CD8-positive, alpha-beta memory T cell (primary cell): ENCODE measurements at regions of chr16 and their contacts with region 1.

Region 1: GRCh38 chr16:3909791-3910570 is 29.5 kb upstream of the CREBBP start:
- DNase-seq: no peak
- H3K4me3 ChIP-seq: no peak overlapping the region
- H3K4me3 Mint-ChIP-seq: no peak overlapping the region
- H3K27ac ChIP-seq: no peak overlapping the region
- H3K27ac Mint-ChIP-seq: peak overlapping the region in 2 of 8 donors; percentile 51 to 85
- H3K4me1 ChIP-seq: no peaks in the 10 kb centered on the region
- H3K4me1 Mint-ChIP-seq: no peaks in the 10 kb centered on the region
- H3K27me3 ChIP-seq: no peaks in the 10 kb centered on the region
- H3K27me3 Mint-ChIP-seq: peaks cover 0 to 7% of the 10 kb centered on the region in 2 donors

Region 2: GRCh38 chr16:3890091-3890490 is 19.9 kb before region 1 on chr16:
- CTCF ChIA-PET with region 1: no interaction called
- POLR2A ChIA-PET with region 1: no interaction called
- DNase-seq: no peak
- H3K4me3 ChIP-seq: no peak overlapping the region
- H3K4me3 Mint-ChIP-seq: no peak overlapping the region
- H3K27ac ChIP-seq: no peak overlapping the region
- H3K27ac Mint-ChIP-seq: no peak overlapping the region
- H3K4me1 ChIP-seq: no peaks in the 10 kb centered on the region
- H3K4me1 Mint-ChIP-seq: no peaks in the 10 kb centered on the region
- H3K27me3 ChIP-seq: peaks cover 3% of the 10 kb centered on the region
- H3K27me3 Mint-ChIP-seq: peaks cover 12 to 17% of the 10 kb centered on the region in 2 donors

Region 3: DNA sequence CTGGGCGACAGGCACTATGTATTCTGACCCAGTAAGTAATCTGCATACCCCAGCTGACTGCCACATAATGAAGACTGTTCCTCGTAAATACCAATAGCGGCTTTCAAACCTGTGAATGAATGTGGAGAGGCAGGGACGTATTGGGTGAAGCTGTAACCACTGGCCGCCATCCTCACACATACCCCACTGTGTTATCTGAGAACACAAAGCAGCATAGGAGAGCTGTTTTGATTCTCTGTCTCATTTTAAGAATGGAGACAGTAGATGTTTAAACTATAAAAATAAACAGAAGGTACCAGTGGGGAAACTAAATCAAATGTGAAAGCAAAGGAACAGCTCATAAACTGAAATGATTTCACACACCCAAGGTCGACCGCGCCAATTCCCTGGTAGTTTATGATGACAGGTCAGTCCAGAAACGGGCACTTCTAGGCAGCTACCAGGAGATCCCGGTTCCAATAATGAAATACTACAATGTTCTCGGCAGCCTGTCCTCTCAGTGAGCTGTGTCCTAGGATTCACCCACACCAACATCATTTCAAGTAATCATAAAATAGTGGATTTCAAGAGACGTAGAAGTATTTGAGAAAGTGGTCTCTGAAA is 96.5 kb after region 1 on chr16:
- CTCF ChIA-PET with region 1: no interaction called
- POLR2A ChIA-PET with region 1: interaction called, 10 read pairs
- DNase-seq: no peak
- H3K4me3 ChIP-seq: no peak overlapping the region
- H3K4me3 Mint-ChIP-seq: no peak overlapping the region
- H3K27ac ChIP-seq: no peak overlapping the region
- H3K27ac Mint-ChIP-seq: peak overlapping the region in 1 of 8 donors; percentile 54
- H3K4me1 ChIP-seq: no peaks in the 10 kb centered on the region
- H3K4me1 Mint-ChIP-seq: no peaks in the 10 kb centered on the region
- H3K27me3 ChIP-seq: no peaks in the 10 kb centered on the region
- H3K27me3 Mint-ChIP-seq: no peaks in the 10 kb centered on the region